ENCODE measurements at regions of chr3 and their contacts with region 1.

Region 1: DNA sequence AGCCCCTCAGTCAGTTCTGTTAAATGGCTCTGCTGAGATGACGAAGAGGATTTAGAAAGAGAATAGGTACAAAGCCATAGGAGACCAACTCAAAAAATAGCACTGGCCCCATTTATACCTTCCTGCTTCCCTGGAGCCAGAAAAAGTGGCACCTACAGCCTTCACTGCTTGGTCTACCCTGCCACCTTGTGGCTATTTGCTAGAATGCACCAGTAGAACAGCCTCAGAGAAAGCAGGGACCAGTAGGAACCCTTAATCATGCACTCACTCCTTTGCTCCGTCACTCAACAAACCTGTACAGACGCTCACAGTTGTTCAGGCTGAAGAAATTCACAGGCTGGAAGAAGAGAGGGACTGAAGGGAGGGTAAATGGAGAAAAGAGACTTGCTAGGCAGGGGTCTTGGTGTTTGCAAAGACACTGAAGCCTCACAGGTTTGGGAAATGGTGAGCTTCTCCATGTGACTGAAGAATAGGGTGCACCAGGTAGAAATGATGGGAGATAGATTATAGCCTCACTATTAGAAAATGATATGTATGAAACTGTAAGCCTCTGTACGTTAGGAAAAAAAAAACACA is 12.1 kb upstream of the RTP2 start:
- DNase-seq: peak; percentile 68 to 80
- H3K4me3 ChIP-seq: no peak overlapping the region
- H3K4me3 Mint-ChIP-seq: no peak overlapping the region
- H3K27ac Mint-ChIP-seq: no peak overlapping the region
- H3K4me1 ChIP-seq: peaks cover 1% of the 10 kb centered on the region; the same call in 1 of the 2 replicates
- H3K4me1 Mint-ChIP-seq: peaks cover 11% of the 10 kb centered on the region
- H3K27me3 ChIP-seq: no peaks in the 10 kb centered on the region
- H3K27me3 Mint-ChIP-seq: no peaks in the 10 kb centered on the region
- CTCF ChIP-seq: peak; percentile 84 to 90

Region 2: GRCh38 chr3:187616307-187616972 is 98.1 kb before region 1 on chr3:
- CTCF ChIA-PET with region 1: no interaction called
- POLR2A ChIA-PET with region 1: no interaction called
- intact Hi-C with region 1: loop called (anchors 1 kb)
- DNase-seq: peak in 1 of 2 experiments; percentile 71
- H3K4me3 ChIP-seq: no peak overlapping the region
- H3K4me3 Mint-ChIP-seq: no peak overlapping the region
- H3K27ac Mint-ChIP-seq: no peak overlapping the region
- H3K4me1 ChIP-seq: no peaks in the 10 kb centered on the region
- H3K4me1 Mint-ChIP-seq: peaks cover 10% of the 10 kb centered on the region
- H3K27me3 ChIP-seq: no peaks in the 10 kb centered on the region
- H3K27me3 Mint-ChIP-seq: no peaks in the 10 kb centered on the region
- CTCF ChIP-seq: peak; percentile 76 to 82